ENCODE measurements at regions of chr10 and their contacts with region 1.

Region 1: DNA sequence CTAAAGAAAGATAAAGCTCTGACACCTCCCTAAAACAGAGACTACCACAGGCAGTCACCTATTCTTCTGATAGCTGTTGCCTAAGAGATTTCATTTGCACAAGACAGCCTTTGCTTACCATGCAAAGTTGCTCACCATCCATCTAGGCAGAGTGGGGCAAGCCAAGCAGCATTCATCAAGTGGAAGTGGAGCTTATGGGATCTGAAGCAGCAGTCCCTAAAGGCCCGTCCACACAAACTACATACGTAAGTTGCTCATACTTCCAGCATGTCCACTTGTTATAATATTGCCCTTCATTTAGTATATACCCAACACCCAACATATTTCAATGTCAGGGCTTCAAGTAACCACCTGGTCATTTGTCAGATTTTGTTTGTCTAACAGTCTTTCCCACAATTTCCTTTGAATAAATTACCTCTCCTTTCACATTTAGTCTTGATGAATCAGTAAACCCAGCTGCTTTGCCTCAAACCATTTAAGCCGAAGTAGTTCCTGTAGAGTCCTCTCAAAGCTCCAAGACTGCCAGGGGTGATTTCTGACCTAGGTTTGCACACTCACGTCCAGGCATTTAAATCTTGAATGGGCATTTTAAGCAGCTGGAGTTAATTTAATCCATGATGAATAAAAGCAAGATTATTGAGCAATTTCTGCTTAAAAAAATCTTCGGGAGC is 67.9 kb downstream of the ATAD1 start:
- DNase-seq: no peak
- H3K4me3 Mint-ChIP-seq: no peak overlapping the region
- H3K27ac Mint-ChIP-seq: no peak overlapping the region
- H3K4me1 Mint-ChIP-seq: peaks cover 33% of the 10 kb centered on the region
- H3K27me3 Mint-ChIP-seq: no peaks in the 10 kb centered on the region

Region 2: GRCh38 chr10:87734987-87735827 is 14.9 kb before region 1 on chr10:
- CTCF ChIA-PET with region 1: interaction called, 11 read pairs
- POLR2A ChIA-PET with region 1: interaction called, 5 read pairs
- intact Hi-C with region 1: no loop called
- DNase-seq: no peak
- H3K4me3 Mint-ChIP-seq: no peak overlapping the region
- H3K27ac Mint-ChIP-seq: no peak overlapping the region
- H3K4me1 Mint-ChIP-seq: no peaks in the 10 kb centered on the region
- H3K27me3 Mint-ChIP-seq: peaks cover 23% of the 10 kb centered on the region

Region 3: DNA sequence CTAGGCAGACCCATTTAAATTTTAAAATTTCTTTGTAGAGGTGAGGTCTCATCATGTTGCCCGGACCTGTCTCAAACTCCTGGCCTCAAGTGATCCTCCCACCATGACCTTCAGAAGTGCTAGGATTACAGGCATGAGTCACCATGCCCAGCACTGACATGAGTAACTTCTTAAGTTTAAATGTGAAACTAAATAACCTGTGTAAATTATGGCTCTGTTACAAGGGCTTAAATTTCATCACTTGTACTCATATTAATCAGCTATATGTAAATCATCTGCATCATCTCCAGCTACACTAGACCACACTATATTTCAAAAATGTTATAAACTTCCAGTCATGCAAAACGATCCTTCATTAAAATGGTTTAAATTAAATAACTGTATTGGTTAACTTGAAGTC is 11.8 kb after region 1 on chr10:
- CTCF ChIA-PET with region 1: no interaction called
- POLR2A ChIA-PET with region 1: no interaction called
- intact Hi-C with region 1: loop called (anchors 1 kb)
- DNase-seq: peak; percentile 75
- H3K4me3 Mint-ChIP-seq: no peak overlapping the region
- H3K27ac Mint-ChIP-seq: peak overlapping the region; percentile 72
- H3K4me1 Mint-ChIP-seq: peaks cover 31% of the 10 kb centered on the region
- H3K27me3 Mint-ChIP-seq: no peaks in the 10 kb centered on the region